ENCODE measurements at regions of chr9 and their contacts with region 1.

Region 1: DNA sequence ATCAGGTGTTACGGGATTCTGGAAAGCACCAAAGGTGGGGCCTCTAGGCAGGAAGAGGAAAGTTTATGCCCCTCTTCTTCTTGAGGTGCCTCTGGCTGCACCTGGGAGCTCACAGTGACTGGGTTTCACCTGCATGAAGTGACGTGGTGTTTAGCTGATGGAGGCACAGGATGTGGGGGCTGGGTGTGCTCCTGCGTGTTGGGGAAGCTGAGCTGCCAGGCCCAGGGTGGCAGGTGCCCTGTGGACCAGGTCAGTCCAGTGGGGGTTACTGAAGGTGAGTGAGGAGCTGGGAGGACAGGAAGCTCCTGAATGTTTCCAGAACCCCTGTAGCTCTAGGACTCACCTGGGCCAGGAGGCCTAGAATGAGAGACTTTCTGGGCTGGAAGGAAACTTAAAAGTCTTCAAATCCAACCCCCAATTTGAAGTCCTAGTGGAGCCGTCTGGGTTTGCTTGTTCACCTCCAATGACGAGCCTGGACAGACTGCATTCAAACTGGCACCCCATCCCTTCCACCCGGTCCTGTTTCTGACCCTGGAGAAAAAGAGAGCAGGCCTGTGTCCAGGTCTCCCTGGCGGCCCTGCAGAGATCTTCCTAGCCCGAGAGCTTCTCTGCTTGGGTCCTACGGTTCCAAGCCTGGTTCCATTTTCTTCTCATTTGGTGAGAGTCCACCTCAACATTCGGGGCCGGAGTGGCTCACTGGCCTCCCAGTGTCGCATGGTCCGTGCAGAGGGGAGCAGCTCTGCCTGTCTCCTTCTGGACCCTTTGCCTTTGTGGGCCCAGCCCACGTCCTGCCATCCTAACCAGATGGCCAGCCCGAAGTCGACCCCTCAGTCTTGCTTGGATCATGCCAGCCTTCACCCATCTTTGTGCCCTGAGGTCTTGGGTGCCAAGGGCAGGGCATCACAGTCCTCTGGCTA is 22.3 kb downstream of the TRAF1 start:
- DNase-seq: peak; percentile 53 to 86 (median 76)
- ATAC-seq: peak; percentile 70 to 91
- H3K4me3 Mint-ChIP-seq: peak overlapping the region; percentile 40 to 82 (median 66)
- H3K27ac Mint-ChIP-seq: peak overlapping the region; percentile 92 to 100 (median 98)
- H3K4me1 Mint-ChIP-seq: peaks cover 37 to 91% (median 86%) of the 10 kb centered on the region in 4 donors
- H3K27me3 Mint-ChIP-seq: no peaks in the 10 kb centered on the region

Region 2: DNA sequence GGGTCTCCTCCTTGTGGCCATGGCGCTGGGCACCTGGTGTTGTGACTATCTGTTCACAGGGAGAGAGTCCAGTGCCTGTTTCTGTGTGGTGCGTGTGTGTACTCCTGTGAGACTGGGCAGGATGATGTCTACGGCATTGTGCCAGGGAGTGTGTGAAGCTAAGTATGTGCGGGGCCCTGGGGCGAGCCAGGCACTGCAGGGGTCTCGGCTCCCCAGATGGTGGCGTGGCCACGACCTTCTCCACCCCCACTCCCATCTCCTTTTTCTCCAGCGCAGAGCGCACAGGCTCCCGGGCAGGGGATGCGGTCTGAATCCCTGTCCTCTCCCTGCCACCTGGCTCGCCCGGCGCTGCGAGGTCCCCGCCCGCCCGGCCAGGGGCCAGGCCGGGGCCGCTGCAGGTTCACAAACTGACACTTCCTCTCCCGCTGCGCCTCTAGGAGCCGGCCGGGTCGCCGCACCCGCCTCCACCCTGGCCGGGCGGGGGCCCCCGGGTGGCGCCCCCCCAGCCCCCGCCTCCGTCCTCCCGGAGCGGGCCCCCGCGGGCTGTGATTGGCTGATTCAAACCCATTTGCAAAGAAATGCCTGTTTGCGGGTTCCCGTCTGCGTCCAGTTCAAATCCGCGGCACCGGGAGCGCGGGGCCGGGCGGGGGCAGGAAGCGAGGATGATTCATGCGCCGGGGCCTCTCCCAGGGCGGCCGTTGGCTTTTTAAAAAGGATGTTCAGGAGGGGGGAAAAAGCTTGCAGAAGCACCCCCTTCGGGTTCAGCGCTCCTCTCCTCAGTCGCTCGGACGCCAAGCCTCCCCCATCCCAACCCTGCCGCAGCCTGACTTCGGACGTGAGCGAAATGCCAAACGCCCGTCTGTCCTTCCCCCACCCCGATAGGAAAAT is 28.1 kb before region 1 on chr9:
- POLR2A ChIA-PET with region 1: interaction called, 102 read pairs
- DNase-seq: peak; percentile 43 to 86 (median 64)
- ATAC-seq: peak; percentile 43 to 44
- H3K4me3 Mint-ChIP-seq: peak overlapping the region; percentile 75 to 91 (median 82)
- H3K27ac Mint-ChIP-seq: peak overlapping the region; percentile 88 to 96 (median 93)
- H3K4me1 Mint-ChIP-seq: peaks cover 34 to 76% (median 66%) of the 10 kb centered on the region in 4 donors
- H3K27me3 Mint-ChIP-seq: no peaks in the 10 kb centered on the region

Region 3: DNA sequence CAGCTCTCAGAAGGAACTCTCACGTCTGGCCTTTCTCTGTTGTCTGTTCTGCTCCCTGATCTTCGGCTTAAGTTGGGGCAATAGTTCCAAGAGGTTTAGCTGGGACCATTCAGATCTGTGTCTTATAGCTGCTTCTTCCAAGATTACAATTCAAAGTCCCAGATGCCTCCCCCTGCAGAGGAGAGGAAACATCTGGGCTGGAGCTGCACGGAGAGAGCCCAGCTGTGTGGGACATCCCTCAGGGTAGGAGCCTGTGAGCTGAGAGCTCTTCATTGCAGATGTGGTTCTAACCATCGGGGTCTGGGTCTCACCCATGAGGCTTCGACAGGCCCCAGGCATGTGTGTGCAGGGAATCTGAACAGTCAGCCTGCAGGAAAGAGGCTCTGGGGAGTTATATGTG is 18.4 kb before region 1 on chr9:
- POLR2A ChIA-PET with region 1: interaction called, 1,842 read pairs
- DNase-seq: no peak
- ATAC-seq: no peak
- H3K4me3 Mint-ChIP-seq: peak overlapping the region in 2 of 10 donors; percentile 7 to 20
- H3K27ac Mint-ChIP-seq: peak overlapping the region in 9 of 10 donors; percentile 7 to 92 (median 70)
- H3K4me1 Mint-ChIP-seq: peaks cover 33 to 79% (median 69%) of the 10 kb centered on the region in 4 donors
- H3K27me3 Mint-ChIP-seq: no peaks in the 10 kb centered on the region